ENCODE measurements at regions of chr2 and their contacts with region 1.

Region 1: GRCh38 chr2:231411831-231412617 is 16.5 kb downstream of the B3GNT7 start:
- DNase-seq: no peak
- H3K4me3 ChIP-seq: peak overlapping the region; percentile 62 to 80 (median 64)
- H3K27ac ChIP-seq: peak overlapping the region in 2 of 4 donors; percentile 12 to 35
- H3K4me1 ChIP-seq: peaks cover 10 to 17% (median 15%) of the 10 kb centered on the region in 4 donors
- H3K27me3 ChIP-seq: no peaks in the 10 kb centered on the region
- CTCF ChIP-seq: peak; percentile 78 to 87 (median 80)
- EP300 ChIP-seq: no peak
- POLR2A ChIP-seq: no peak

Region 2: GRCh38 chr2:231227309-231228162 is 184.5 kb before region 1 on chr2:
- intact Hi-C with region 1: loop called (anchors 5 kb)
- DNase-seq: peak; percentile 93
- H3K4me3 ChIP-seq: no peak overlapping the region
- H3K27ac ChIP-seq: peak overlapping the region; percentile 87 to 92 (median 88)
- H3K4me1 ChIP-seq: peaks cover 5 to 77% (median 75%) of the 10 kb centered on the region in 4 donors
- H3K27me3 ChIP-seq: no peaks in the 10 kb centered on the region
- CTCF ChIP-seq: peak; percentile 68 to 83 (median 74)
- EP300 ChIP-seq: no peak
- POLR2A ChIP-seq: no peak

Region 3: DNA sequence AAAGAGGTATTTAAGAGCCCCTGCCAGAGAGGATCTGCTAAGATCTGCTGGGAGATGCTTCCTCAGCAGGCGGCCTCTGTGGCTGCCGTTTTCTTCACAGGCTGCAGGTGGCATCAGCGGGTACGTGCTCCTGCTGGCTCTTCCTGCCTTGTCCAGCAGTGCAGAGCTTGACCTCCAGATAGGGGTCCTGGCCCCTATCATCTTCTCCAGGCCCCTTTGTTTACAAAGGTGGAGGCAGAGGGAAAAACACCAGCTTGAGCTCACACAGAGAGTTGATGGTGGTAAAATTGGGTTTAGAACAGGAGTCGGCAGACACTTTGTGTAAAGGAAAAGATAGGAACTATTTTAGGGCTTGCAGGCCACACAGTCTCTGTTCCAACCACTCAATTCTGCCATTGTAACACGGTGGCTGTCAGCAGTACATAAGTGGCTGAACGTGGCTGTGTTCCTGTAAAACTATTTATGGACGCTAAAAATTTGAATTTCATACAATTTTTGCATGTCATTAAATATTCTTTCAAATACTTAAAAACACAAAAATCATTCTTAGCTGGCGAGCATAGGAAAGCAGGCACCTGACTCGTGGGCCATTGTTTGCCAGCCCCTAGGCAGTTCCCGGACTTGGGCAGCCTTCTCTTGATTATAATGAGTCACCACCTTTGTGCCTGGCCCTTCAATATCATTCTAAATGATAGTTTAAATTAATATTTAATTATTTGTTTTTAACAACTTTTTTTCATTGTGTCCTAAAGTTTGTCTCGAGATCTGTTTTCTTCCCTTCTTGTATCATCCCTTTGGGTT is 114.7 kb before region 1 on chr2:
- intact Hi-C with region 1: loop called (anchors 10 kb)
- DNase-seq: peak; percentile 91
- H3K4me3 ChIP-seq: no peak overlapping the region
- H3K27ac ChIP-seq: no peak overlapping the region
- H3K4me1 ChIP-seq: peaks cover 0 to 14% (median 5%) of the 10 kb centered on the region in 4 donors
- H3K27me3 ChIP-seq: no peaks in the 10 kb centered on the region
- CTCF ChIP-seq: peak in 2 of 3 experiments; percentile 24 to 59
- EP300 ChIP-seq: no peak
- POLR2A ChIP-seq: no peak

Measured in esophagus muscularis mucosa (tissue), 4 donors.